Calu3 (cell line): ENCODE measurements at regions of chr17 and their contacts with region 1.

Region 1: DNA sequence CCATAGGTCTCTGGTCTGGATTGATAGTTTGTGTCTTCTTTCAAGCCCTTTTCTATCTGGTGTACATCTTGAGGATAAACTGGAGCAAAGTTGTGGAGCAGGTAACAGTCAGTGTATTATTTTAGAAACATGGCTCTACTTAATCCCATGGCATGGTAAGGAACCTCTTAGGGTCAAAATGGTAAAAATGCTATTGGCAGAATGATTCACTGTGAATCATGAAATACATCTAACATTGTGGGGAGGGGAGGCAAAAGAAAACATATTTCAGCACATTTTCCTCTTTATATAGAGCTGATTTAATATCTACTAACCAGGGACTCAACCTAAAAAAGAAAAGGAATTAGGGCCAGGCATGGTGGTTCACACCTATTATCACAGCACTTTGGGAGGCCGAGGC is 17.9 kb upstream of the ALDH3A2 start:
- DNase-seq: no peak
- H3K4me3 Mint-ChIP-seq: no peak overlapping the region
- H3K27ac Mint-ChIP-seq: no peak overlapping the region
- H3K4me1 Mint-ChIP-seq: no peaks in the 10 kb centered on the region
- H3K27me3 Mint-ChIP-seq: no peaks in the 10 kb centered on the region
- CTCF ChIP-seq: no peak

Region 2: GRCh38 chr17:19482576-19482975 is 148.1 kb before region 1 on chr17:
- CTCF ChIA-PET with region 1: no interaction called
- intact Hi-C with region 1: no loop called
- DNase-seq: no peak
- H3K4me3 Mint-ChIP-seq: no peak overlapping the region
- H3K27ac Mint-ChIP-seq: no peak overlapping the region
- H3K4me1 Mint-ChIP-seq: no peaks in the 10 kb centered on the region
- H3K27me3 Mint-ChIP-seq: no peaks in the 10 kb centered on the region
- CTCF ChIP-seq: no peak

Region 3: GRCh38 chr17:19579867-19580565 is 50.6 kb before region 1 on chr17:
- CTCF ChIA-PET with region 1: interaction called, 10 read pairs
- intact Hi-C with region 1: no loop called
- DNase-seq: no peak
- H3K4me3 Mint-ChIP-seq: no peak overlapping the region
- H3K27ac Mint-ChIP-seq: no peak overlapping the region
- H3K4me1 Mint-ChIP-seq: no peaks in the 10 kb centered on the region
- H3K27me3 Mint-ChIP-seq: peaks cover 28% of the 10 kb centered on the region
- CTCF ChIP-seq: no peak